Activated CD4-positive, alpha-beta memory T cell treated with anti-CD3 and anti-CD28 coated beads for 36 hours (primary cell): ENCODE measurements at regions of chr12 and their contacts with region 1.

Region 1: DNA sequence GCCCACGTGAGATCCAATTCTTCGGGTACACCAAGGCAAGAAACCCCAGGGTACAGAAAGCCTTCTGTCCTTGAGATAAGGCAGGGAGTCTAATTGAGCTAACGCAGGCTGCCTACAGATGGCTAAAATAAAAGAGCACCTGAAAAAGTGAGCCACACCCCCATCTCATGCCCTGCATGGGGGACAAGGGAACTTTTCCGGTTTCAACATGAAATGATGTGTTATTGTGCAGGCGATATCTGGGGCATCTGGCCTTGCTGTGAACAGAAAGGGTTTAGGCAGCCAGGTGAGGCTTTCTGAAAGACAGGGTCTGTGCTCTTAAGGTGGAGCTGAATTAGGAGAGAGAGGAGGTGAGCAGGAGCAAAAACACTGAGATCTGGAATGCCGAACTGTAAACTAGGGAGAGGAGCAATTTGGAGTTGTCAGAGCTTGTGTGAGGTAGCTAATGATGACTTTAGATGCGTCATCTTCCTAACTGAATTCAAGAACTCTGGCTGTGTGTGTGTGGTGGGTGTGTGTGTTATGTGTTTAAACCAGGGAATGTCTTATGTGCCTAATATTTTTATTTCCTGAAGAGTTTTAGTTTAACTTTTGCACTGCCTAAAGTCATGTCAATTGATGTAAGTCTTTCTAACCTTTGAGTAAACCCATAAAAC is 20.1 kb upstream of the LDHB start:
- DNase-seq: peak; percentile 28
- H3K4me3 Mint-ChIP-seq: peak overlapping the region; percentile 24
- H3K27ac Mint-ChIP-seq: peak overlapping the region; percentile 69
- H3K4me1 Mint-ChIP-seq: peaks cover 48% of the 10 kb centered on the region
- H3K27me3 Mint-ChIP-seq: no peaks in the 10 kb centered on the region

Region 2: DNA sequence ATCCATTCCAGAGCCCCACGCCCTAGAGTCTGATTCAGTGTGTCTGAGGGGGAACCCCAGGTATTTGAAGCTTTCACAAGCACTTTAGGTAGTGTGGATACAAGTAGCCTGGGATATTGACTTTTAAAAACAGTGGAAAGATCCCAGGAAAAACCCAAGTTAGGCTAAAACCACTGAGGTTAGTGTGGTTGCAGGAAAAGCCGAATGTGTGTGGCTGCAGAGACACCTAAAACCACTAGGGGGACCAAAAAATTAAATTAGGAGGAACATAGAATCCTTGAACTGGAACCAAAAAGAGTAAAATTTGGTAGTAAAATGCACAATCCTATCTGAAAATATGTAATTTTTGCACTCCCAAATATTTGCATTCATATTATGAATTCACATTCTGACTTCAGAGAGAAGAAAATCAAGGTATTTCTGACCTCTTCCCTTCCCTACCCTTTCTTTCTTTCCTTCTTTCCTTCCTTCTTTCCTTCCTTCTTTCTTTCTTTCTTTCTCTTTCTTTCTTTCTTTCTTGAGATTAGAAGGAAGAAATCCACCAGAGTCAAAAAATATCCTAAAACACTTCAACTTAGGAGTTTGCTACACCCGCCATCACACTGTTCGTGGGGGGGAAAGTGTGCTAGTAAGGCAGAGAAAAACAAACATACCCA is 380.9 kb before region 1 on chr12:
- CTCF ChIA-PET with region 1: interaction called, 7 read pairs
- POLR2A ChIA-PET with region 1: no interaction called
- intact Hi-C with region 1: loop called (anchors 2 kb)
- DNase-seq: no peak
- H3K4me3 Mint-ChIP-seq: no peak overlapping the region
- H3K27ac Mint-ChIP-seq: no peak overlapping the region
- H3K4me1 Mint-ChIP-seq: peaks cover 3% of the 10 kb centered on the region
- H3K27me3 Mint-ChIP-seq: peaks cover 5% of the 10 kb centered on the region

Region 3: GRCh38 chr12:21438643-21439042 is 239.1 kb before region 1 on chr12:
- CTCF ChIA-PET with region 1: no interaction called
- POLR2A ChIA-PET with region 1: interaction called, 3 read pairs
- intact Hi-C with region 1: loop called (anchors 5 kb)
- DNase-seq: no peak
- H3K4me3 Mint-ChIP-seq: peak overlapping the region; percentile 93
- H3K27ac Mint-ChIP-seq: peak overlapping the region; percentile 96
- H3K4me1 Mint-ChIP-seq: peaks cover 39% of the 10 kb centered on the region
- H3K27me3 Mint-ChIP-seq: no peaks in the 10 kb centered on the region

Region 4: GRCh38 chr12:21539797-21540196 is 138.0 kb before region 1 on chr12:
- CTCF ChIA-PET with region 1: interaction called, 3 read pairs
- POLR2A ChIA-PET with region 1: no interaction called
- intact Hi-C with region 1: loop called (anchors 5 kb)
- DNase-seq: no peak
- H3K4me3 Mint-ChIP-seq: no peak overlapping the region
- H3K27ac Mint-ChIP-seq: no peak overlapping the region
- H3K4me1 Mint-ChIP-seq: peaks cover 10% of the 10 kb centered on the region
- H3K27me3 Mint-ChIP-seq: peaks cover 2% of the 10 kb centered on the region

Region 5: DNA sequence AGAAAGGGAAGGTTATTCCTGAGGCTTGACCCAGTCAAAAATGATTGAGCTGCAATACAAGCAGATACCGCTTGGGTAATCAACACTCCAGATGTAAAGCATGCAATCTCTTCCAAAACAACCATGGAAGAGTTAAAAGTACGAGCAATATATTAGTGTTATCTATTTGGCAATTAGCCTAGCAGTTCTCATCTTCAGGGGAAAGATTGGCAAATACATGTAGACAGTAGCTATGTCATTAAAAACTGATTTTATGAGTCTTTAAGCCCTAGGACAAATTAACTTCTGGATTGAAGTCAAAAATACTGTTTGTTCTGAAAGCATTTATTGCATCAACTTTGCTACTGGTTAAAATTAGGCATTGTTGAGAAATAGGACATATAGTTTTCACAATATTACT is 63.8 kb before region 1 on chr12:
- CTCF ChIA-PET with region 1: interaction called, 10 read pairs
- POLR2A ChIA-PET with region 1: no interaction called
- intact Hi-C with region 1: loop called (anchors 1 kb)
- DNase-seq: no peak
- H3K4me3 Mint-ChIP-seq: no peak overlapping the region
- H3K27ac Mint-ChIP-seq: no peak overlapping the region
- H3K4me1 Mint-ChIP-seq: peaks cover 50% of the 10 kb centered on the region
- H3K27me3 Mint-ChIP-seq: no peaks in the 10 kb centered on the region

Region 6: DNA sequence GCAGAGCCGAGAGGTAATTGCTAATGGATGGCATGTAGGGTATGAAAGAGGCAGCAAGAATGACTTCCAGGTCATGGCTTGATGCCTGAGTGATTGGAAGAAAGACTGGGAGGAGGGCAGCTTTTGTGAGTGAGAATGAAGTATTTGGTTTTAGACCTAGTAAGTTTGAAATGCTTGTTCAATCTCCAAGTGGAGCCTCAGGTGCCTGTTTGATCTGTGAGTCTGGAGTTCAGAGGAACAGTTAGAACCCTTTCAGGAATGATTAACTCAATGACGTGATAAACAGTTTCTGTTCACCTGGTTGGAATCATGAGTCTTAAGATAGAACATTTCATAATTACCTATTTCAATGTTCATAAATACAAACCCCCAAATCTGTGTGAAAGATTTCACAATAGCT is 86.3 kb after region 1 on chr12:
- CTCF ChIA-PET with region 1: no interaction called
- POLR2A ChIA-PET with region 1: no interaction called
- intact Hi-C with region 1: no loop called
- DNase-seq: no peak
- H3K4me3 Mint-ChIP-seq: no peak overlapping the region
- H3K27ac Mint-ChIP-seq: no peak overlapping the region
- H3K4me1 Mint-ChIP-seq: no peaks in the 10 kb centered on the region
- H3K27me3 Mint-ChIP-seq: no peaks in the 10 kb centered on the region